B cell (primary cell): ENCODE measurements at regions of chr19 and their contacts with region 1.

Region 1: GRCh38 chr19:43934985-43935708 is at the start of gene ZNF45:
- DNase-seq: peak; percentile 91
- ATAC-seq: peak; percentile 96
- H3K4me3 ChIP-seq: peak within 1 kb of the TSS; percentile 61 to 93 (median 81)
- H3K4me3 Mint-ChIP-seq: peak within 1 kb of the TSS; percentile 97
- H3K27ac ChIP-seq: peak within 1 kb of the TSS; percentile 55 to 72
- H3K27ac Mint-ChIP-seq: peak within 1 kb of the TSS; percentile 88
- H3K4me1 ChIP-seq: peaks cover 11 to 12% of the 10 kb centered on the region in 2 donors
- H3K4me1 Mint-ChIP-seq: peaks cover 26% of the 10 kb centered on the region
- H3K27me3 ChIP-seq: no peaks in the 10 kb centered on the region
- H3K27me3 Mint-ChIP-seq: no peaks in the 10 kb centered on the region
- CTCF ChIP-seq: no peak
- total RNA-seq, gene ZNF45: 30.1 and 31.7 TPM in 2 replicates

Region 2: GRCh38 chr19:43826787-43827754 is 108.1 kb before region 1 on chr19 and contains the start of gene ZNF283:
- CTCF ChIA-PET with region 1: interaction called, 4 read pairs
- POLR2A ChIA-PET with region 1: no interaction called
- intact Hi-C with region 1: loop called (anchors 1 kb)
- DNase-seq: peak; percentile 86
- ATAC-seq: peak; percentile 99
- H3K4me3 ChIP-seq: peak within 1 kb of the TSS; percentile 56 to 88 (median 69)
- H3K4me3 Mint-ChIP-seq: peak within 1 kb of the TSS; percentile 92
- H3K27ac ChIP-seq: peak within 1 kb of the TSS in 1 of 2 donors; percentile 23
- H3K27ac Mint-ChIP-seq: peak within 1 kb of the TSS; percentile 50
- H3K4me1 ChIP-seq: peaks cover 9 to 12% of the 10 kb centered on the region in 2 donors
- H3K4me1 Mint-ChIP-seq: peaks cover 17% of the 10 kb centered on the region
- H3K27me3 ChIP-seq: peaks cover 0 to under 1% (median 0%) of the 10 kb centered on the region in 4 experiments
- H3K27me3 Mint-ChIP-seq: peaks cover 11% of the 10 kb centered on the region
- CTCF ChIP-seq: no peak
- total RNA-seq, gene ZNF283: 20.8 and 23.3 TPM in 2 replicates

Region 3: GRCh38 chr19:43950834-43951645 is 15.9 kb after region 1 on chr19 and contains the start of gene ZNF221:
- CTCF ChIA-PET with region 1: no interaction called
- POLR2A ChIA-PET with region 1: interaction called, 3 read pairs
- intact Hi-C with region 1: loop called (anchors 1 kb)
- DNase-seq: peak; percentile 80
- ATAC-seq: peak; percentile 94
- H3K4me3 ChIP-seq: peak within 1 kb of the TSS; percentile 68 to 95 (median 88)
- H3K4me3 Mint-ChIP-seq: peak within 1 kb of the TSS; percentile 96
- H3K27ac ChIP-seq: peak within 1 kb of the TSS; percentile 22 to 51
- H3K27ac Mint-ChIP-seq: peak within 1 kb of the TSS; percentile 80
- H3K4me1 ChIP-seq: peaks cover 3 to 9% of the 10 kb centered on the region in 2 donors
- H3K4me1 Mint-ChIP-seq: peaks cover 12% of the 10 kb centered on the region
- H3K27me3 ChIP-seq: peaks cover 0 to 7% (median 2%) of the 10 kb centered on the region in 4 experiments
- H3K27me3 Mint-ChIP-seq: peaks cover 10% of the 10 kb centered on the region
- CTCF ChIP-seq: no peak
- total RNA-seq, gene ZNF221: 5.0 and 7.0 TPM in 2 replicates

Region 4: GRCh38 chr19:44025217-44025936 is 90.2 kb after region 1 on chr19 and contains the start of gene ZNF222:
- CTCF ChIA-PET with region 1: no interaction called
- POLR2A ChIA-PET with region 1: no interaction called
- intact Hi-C with region 1: loop called (anchors 1 kb)
- DNase-seq: peak; percentile 83
- ATAC-seq: peak; percentile 97
- H3K4me3 ChIP-seq: peak within 1 kb of the TSS; percentile 72 to 98 (median 84)
- H3K4me3 Mint-ChIP-seq: peak within 1 kb of the TSS; percentile 96
- H3K27ac ChIP-seq: peak within 1 kb of the TSS; percentile 38 to 66
- H3K27ac Mint-ChIP-seq: peak within 1 kb of the TSS; percentile 88
- H3K4me1 ChIP-seq: peaks cover 11 to 13% of the 10 kb centered on the region in 2 donors
- H3K4me1 Mint-ChIP-seq: peaks cover 19% of the 10 kb centered on the region
- H3K27me3 ChIP-seq: no peaks in the 10 kb centered on the region
- H3K27me3 Mint-ChIP-seq: peaks cover 8% of the 10 kb centered on the region
- CTCF ChIP-seq: no peak
- total RNA-seq, gene ZNF222: 7.5 and 9.1 TPM in 2 replicates

Region 5: GRCh38 chr19:44093931-44094765 is 159.0 kb after region 1 on chr19 and contains the start of gene ZNF224:
- CTCF ChIA-PET with region 1: interaction called, 7 read pairs
- POLR2A ChIA-PET with region 1: no interaction called
- intact Hi-C with region 1: loop called (anchors 1 kb)
- DNase-seq: peak; percentile 87
- ATAC-seq: peak; percentile 94
- H3K4me3 ChIP-seq: peak within 1 kb of the TSS; percentile 67 to 95 (median 89)
- H3K4me3 Mint-ChIP-seq: peak within 1 kb of the TSS; percentile 96
- H3K27ac ChIP-seq: peak within 1 kb of the TSS; percentile 39 to 70
- H3K27ac Mint-ChIP-seq: peak within 1 kb of the TSS; percentile 90
- H3K4me1 ChIP-seq: peaks cover 4 to 9% of the 10 kb centered on the region in 2 donors
- H3K4me1 Mint-ChIP-seq: peaks cover 22% of the 10 kb centered on the region
- H3K27me3 ChIP-seq: no peaks in the 10 kb centered on the region
- H3K27me3 Mint-ChIP-seq: no peaks in the 10 kb centered on the region
- CTCF ChIP-seq: no peak
- total RNA-seq, gene ZNF224: 94.2 and 96.1 TPM in 2 replicates

Region 6: DNA sequence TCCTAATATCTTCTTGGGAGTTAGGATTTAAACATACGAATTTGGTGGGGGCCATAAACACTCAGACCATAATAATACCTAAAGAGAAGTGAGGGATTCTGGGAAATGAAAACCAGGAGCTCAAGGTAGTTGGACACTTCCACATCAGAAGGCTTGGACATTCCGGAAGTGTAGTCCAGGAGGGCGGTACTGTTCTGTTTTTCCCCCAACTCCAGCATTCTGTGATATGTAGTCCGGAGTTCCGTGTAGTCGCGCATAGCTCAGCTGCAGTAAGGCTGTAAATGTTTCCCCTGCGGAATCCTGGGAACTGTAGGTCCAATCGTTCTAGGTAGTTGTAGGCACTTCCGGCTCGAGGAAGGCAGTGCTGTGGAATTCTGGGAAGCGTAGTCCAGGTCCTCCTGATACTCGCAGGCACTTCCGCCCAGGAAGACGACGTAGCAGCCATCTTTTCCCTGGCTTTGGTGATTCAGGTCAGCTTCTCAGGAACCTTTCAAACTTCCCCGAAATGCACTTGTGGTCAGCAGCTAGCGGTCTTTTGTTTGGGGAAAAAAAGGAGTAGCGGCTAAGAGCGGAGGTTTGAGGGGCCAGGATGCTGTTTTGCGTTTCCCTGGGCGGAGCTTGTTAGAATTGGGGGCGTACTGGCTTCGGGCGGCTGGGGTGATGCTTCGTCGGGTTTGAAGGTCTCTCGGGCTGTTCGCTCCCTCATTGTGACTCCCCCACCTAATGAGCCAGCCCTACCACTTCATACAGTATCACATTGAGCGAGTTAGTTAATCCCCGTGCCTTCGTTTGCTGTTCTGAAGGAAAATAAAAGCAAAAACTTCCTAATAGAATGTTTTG is 229.7 kb after region 1 on chr19 and contains the start of gene ZNF226:
- CTCF ChIA-PET with region 1: no interaction called
- POLR2A ChIA-PET with region 1: no interaction called
- intact Hi-C with region 1: loop called (anchors 1 kb)
- DNase-seq: peak; percentile 89
- ATAC-seq: peak; percentile 95
- H3K4me3 ChIP-seq: peak within 1 kb of the TSS; percentile 72 to 99 (median 88)
- H3K4me3 Mint-ChIP-seq: peak within 1 kb of the TSS; percentile 98
- H3K27ac ChIP-seq: peak within 1 kb of the TSS; percentile 73 to 83
- H3K27ac Mint-ChIP-seq: peak within 1 kb of the TSS; percentile 98
- H3K4me1 ChIP-seq: peaks cover 11 to 16% of the 10 kb centered on the region in 2 donors
- H3K4me1 Mint-ChIP-seq: peaks cover 31% of the 10 kb centered on the region
- H3K27me3 ChIP-seq: no peaks in the 10 kb centered on the region
- H3K27me3 Mint-ChIP-seq: no peaks in the 10 kb centered on the region
- CTCF ChIP-seq: no peak
- total RNA-seq, gene ZNF226: 55.8 and 58.8 TPM in 2 replicates

Region 7: DNA sequence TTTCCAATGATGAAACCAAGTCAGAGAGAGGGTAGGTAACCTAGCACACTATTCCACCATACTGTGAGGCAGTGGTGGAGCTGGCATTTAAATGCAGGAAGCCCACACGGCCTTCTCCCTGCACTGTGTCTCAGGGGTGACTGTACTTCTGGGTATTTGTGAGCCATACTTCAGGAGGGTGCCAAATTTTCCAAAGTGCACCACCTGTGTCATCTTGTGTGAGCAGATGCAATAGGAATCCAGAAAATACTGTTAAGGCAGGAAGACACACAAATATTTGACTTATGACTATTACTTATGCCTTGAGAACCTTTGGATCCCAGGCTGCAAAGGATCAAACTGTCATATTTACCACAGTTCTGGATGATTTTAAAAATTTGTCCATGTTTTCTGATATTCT is 495.8 kb after region 1 on chr19:
- CTCF ChIA-PET with region 1: no interaction called
- POLR2A ChIA-PET with region 1: no interaction called
- intact Hi-C with region 1: no loop called
- DNase-seq: no peak
- ATAC-seq: no peak
- H3K4me3 ChIP-seq: no peak overlapping the region
- H3K4me3 Mint-ChIP-seq: no peak overlapping the region
- H3K27ac ChIP-seq: no peak overlapping the region
- H3K27ac Mint-ChIP-seq: no peak overlapping the region
- H3K4me1 ChIP-seq: no peaks in the 10 kb centered on the region
- H3K4me1 Mint-ChIP-seq: no peaks in the 10 kb centered on the region
- H3K27me3 ChIP-seq: no peaks in the 10 kb centered on the region
- H3K27me3 Mint-ChIP-seq: no peaks in the 10 kb centered on the region
- CTCF ChIP-seq: no peak